ENCODE measurements at regions of chr3 and their contacts with region 1.

Region 1: DNA sequence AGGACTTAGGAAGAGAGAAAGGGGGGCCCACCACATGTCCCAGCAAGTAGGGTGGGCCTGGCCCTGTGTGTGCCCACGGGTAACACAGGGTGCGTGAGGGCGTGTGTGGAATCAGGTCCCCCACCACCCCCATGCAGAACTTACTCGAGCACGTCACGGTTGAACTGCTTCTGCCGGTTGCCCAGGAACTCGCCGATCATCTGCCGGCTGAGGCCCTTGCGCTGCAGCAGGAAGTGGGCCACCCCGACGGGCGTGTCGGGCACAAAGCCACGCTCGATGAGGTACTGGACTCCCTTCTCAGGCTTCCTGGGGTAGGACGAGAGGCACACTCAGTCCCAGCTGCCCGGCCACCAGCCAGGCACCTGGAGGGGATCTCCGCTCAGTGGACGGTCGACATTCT is 83.1 kb upstream of the RPL32 start:
- DNase-seq: no peak
- H3K4me3 ChIP-seq: no peak overlapping the region
- H3K27ac ChIP-seq: peak overlapping the region in 27 of 59 donors; percentile 8 to 77 (median 50)
- H3K27me3 ChIP-seq: no peaks in the 10 kb centered on the region
- CTCF ChIP-seq: no peak

Region 2: DNA sequence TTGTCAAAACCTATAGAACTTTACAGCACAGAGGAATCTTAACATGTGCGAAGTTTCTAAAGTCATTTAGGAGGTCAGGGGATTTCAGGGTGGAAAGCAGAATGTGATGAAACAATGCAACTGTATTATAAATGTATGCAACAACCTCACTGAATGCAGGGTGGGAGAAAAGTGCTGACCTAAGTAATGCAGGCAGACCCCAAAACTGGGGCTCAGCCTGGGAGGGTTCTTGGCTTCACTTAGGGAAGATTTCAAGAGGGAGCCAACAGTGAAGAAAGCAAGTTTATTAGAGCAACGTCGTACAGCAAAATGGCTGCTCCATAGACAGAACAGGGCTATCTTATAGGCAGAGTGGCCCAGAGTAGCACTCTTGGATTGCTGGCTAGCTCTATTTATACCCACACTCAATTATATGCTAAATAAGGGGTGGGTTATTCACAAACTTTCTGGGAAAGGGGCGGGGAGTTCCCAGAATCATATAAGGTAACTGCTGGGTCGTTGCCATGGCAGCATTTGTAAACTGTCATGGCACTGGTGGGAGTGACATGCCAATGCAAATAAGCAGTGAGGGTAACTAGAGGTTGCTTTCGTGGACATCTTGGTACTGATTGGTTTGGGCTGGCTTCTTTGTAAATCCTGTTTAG is 142.1 kb before region 1 on chr3:
- intact Hi-C with region 1: no loop called
- DNase-seq: no peak
- H3K4me3 ChIP-seq: no peak overlapping the region
- H3K27ac ChIP-seq: no peak overlapping the region
- H3K27me3 ChIP-seq: no peaks in the 10 kb centered on the region
- CTCF ChIP-seq: no peak

Region 3: DNA sequence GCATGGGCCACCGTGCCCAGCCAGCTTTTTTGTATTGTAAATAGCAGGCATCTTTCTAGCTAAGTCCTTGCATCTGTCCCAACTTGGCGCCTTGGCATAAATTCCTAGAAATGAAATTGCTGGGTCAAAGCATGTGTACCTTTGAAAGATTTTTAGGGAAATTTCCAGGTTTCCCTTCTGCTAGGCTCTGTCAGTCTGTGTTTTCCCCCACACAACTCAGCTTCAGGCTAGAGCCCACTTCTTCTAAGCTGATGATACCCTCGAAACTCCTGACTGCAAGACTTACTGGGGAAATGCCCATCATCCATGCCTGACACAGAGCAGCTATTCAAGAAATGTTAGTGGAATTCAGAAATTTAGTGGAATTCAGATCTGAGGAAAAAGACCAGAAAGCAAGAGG is 72.2 kb before region 1 on chr3:
- intact Hi-C with region 1: no loop called
- DNase-seq: no peak
- H3K4me3 ChIP-seq: no peak overlapping the region
- H3K27ac ChIP-seq: no peak overlapping the region
- H3K27me3 ChIP-seq: no peaks in the 10 kb centered on the region
- CTCF ChIP-seq: no peak

Region 4: DNA sequence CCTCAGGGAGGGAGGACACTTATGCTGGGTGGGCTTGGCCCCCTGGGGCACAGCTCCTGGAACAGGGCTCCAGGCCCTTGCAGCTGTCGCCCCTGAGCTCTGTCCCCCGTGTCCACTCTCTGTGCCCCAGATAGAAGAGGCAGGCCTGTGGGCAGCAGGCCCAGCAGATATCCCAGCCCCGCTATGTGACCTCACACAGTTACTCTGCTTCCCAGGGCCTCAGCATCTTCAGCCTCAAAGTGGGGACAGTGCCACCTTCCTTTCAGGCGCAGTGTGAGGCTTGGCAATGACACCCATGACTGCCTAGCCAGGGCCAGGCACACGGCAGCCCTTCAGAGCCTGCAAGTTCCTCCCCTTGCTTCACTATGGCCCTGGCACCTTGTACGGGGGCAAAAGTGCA is 50.4 kb after region 1 on chr3:
- intact Hi-C with region 1: loop called in 1 of 2 experiments (anchors 1 kb)
- DNase-seq: no peak
- H3K4me3 ChIP-seq: no peak overlapping the region
- H3K27ac ChIP-seq: peak overlapping the region in 1 of 59 donors; percentile 10
- H3K27me3 ChIP-seq: no peaks in the 10 kb centered on the region
- CTCF ChIP-seq: no peak

Measured in dorsolateral prefrontal cortex (tissue), 120 donors.